GM12878 (cell line): ENCODE measurements at regions of chr11 and their contacts with region 1.

Region 1: DNA sequence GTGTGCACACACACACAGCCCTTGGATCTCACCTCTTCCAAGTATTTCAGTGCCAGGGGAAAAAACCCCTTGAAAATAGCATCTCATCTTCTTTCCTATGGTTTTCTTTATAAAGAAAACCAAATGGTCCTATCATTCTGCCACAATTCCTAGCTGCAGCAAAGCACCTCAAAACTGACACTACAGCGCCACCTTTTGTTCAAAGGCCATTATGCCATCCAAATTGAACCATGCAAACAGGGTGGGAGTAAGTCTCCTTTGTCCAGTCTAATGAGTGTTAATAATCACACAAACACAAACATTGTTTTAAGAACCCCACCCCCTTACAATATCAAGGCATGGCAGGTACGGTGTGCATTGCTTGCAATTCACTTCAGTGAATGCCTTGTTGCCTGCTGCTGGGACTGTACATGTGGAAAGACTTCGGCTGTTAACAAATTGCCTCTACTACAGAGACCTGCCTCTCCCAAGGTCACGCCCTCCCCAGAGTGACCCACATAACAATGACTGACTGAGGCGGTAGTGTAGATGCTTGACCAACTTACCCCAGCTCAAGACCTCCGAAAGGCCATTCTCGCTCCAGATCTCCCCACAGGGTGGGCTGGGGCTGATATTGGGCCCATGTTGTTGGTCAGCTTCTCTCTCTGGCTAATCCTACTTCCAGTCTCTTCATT is 31.7 kb downstream of the FAM181B start:
- DNase-seq: no peak
- ATAC-seq: peak; percentile 77
- H3K4me3 ChIP-seq: no peak overlapping the region
- H3K27ac ChIP-seq: no peak overlapping the region
- H3K4me1 ChIP-seq: no peaks in the 10 kb centered on the region
- H3K27me3 ChIP-seq: no peaks in the 10 kb centered on the region; a peak in 1 of 4 replicates
- CTCF ChIP-seq: peak; percentile 68 to 73 (median 72)
- EP300 ChIP-seq: no peak
- POLR2A ChIP-seq: no peak
- RAD21 ChIP-seq: peak; percentile 64

Region 2: GRCh38 chr11:81644239-81644840 is 1057.6 kb before region 1 on chr11:
- CTCF ChIA-PET with region 1: interaction called, 3 read pairs
- POLR2A ChIA-PET with region 1: no interaction called
- RAD21 ChIA-PET with region 1: no interaction called
- SMC1A ChIA-PET with region 1: interaction called, 3 read pairs
- in situ Hi-C with region 1: loop called (anchors 10 kb)
- intact Hi-C with region 1: no loop called
- DNase-seq: no peak
- ATAC-seq: peak; percentile 90
- H3K4me3 ChIP-seq: no peak overlapping the region
- H3K27ac ChIP-seq: no peak overlapping the region
- H3K4me1 ChIP-seq: no peaks in the 10 kb centered on the region
- H3K27me3 ChIP-seq: no peaks in the 10 kb centered on the region
- CTCF ChIP-seq: peak; percentile 49 to 58 (median 55); a peak in 5 of 6 replicates
- EP300 ChIP-seq: no peak
- POLR2A ChIP-seq: no peak
- RAD21 ChIP-seq: peak; percentile 69

Region 3: DNA sequence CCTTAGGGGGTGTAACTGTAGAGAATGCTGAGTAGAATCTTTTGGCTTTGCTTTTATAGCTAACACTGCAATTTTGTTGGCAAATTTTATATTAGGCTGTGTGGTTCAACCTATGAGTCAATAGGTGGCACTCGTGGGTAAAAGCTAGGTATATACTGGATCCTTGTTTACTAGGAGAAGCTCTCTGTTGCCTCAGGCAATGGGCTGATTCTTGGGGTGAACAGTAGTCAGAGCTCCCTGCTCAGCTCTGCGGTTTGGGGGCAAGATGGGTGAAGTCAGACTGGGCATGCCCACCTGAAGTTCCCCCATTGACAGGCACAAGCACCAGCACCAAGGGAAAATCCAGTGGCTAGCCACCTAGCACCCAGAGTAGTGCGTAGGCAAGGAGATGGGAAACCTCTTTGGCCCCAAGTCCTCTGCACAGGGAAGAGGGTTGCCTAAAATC is 207.0 kb before region 1 on chr11:
- CTCF ChIA-PET with region 1: interaction called, 15 read pairs
- POLR2A ChIA-PET with region 1: no interaction called
- RAD21 ChIA-PET with region 1: interaction called, 3 read pairs
- SMC1A ChIA-PET with region 1: interaction called, 4 read pairs
- in situ Hi-C with region 1: no loop called
- intact Hi-C with region 1: no loop called
- DNase-seq: no peak
- ATAC-seq: peak; percentile 86
- H3K4me3 ChIP-seq: no peak overlapping the region
- H3K27ac ChIP-seq: no peak overlapping the region
- H3K4me1 ChIP-seq: no peaks in the 10 kb centered on the region
- H3K27me3 ChIP-seq: no peaks in the 10 kb centered on the region
- CTCF ChIP-seq: peak; percentile 32 to 53 (median 46); a peak in 5 of 6 replicates
- EP300 ChIP-seq: no peak
- POLR2A ChIP-seq: no peak
- RAD21 ChIP-seq: no peak

Region 4: GRCh38 chr11:82653752-82654151 is 48.2 kb before region 1 on chr11:
- CTCF ChIA-PET with region 1: no interaction called
- POLR2A ChIA-PET with region 1: no interaction called
- RAD21 ChIA-PET with region 1: no interaction called
- SMC1A ChIA-PET with region 1: no interaction called
- in situ Hi-C with region 1: no loop called
- intact Hi-C with region 1: no loop called
- DNase-seq: no peak
- ATAC-seq: no peak
- H3K4me3 ChIP-seq: no peak overlapping the region
- H3K27ac ChIP-seq: no peak overlapping the region
- H3K4me1 ChIP-seq: no peaks in the 10 kb centered on the region
- H3K27me3 ChIP-seq: no peaks in the 10 kb centered on the region
- CTCF ChIP-seq: no peak
- EP300 ChIP-seq: no peak
- POLR2A ChIP-seq: no peak
- RAD21 ChIP-seq: no peak

Region 5: GRCh38 chr11:82682003-82682751 is 19.8 kb before region 1 on chr11:
- CTCF ChIA-PET with region 1: interaction called, 28 read pairs
- POLR2A ChIA-PET with region 1: no interaction called
- RAD21 ChIA-PET with region 1: no interaction called
- SMC1A ChIA-PET with region 1: interaction called, 18 read pairs
- in situ Hi-C with region 1: no loop called
- intact Hi-C with region 1: no loop called
- DNase-seq: peak; percentile 9
- ATAC-seq: peak; percentile 95
- H3K4me3 ChIP-seq: no peak overlapping the region
- H3K27ac ChIP-seq: no peak overlapping the region
- H3K4me1 ChIP-seq: no peaks in the 10 kb centered on the region
- H3K27me3 ChIP-seq: no peaks in the 10 kb centered on the region; a peak in 1 of 4 replicates
- CTCF ChIP-seq: peak; percentile 42 to 67 (median 58); a peak in 5 of 6 replicates
- EP300 ChIP-seq: no peak
- POLR2A ChIP-seq: no peak
- RAD21 ChIP-seq: peak; percentile 73

Region 6: DNA sequence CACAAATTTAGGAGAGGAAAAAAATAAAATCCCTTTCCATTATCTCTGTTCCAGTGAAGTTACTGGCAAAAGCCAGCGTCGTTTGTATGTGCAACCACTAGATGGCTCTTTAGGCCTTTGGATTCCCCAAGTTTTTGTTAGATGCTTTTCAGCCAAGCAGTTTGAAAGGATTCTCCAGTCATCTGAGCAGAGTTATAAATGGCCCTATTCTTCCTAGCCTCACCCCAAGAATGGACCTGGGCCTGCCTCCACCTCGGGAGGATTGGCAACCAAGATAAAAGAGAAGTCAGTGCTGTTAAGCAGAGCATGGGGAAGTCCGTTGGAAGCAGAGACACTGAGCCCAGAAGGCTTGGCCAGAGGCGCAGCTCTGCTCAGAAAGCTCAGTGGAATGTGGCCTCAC is 16.3 kb after region 1 on chr11:
- CTCF ChIA-PET with region 1: interaction called, 14 read pairs
- POLR2A ChIA-PET with region 1: no interaction called
- RAD21 ChIA-PET with region 1: interaction called, 5 read pairs
- SMC1A ChIA-PET with region 1: interaction called, 7 read pairs
- in situ Hi-C with region 1: no loop called
- intact Hi-C with region 1: no loop called
- DNase-seq: no peak
- ATAC-seq: peak; percentile 75
- H3K4me3 ChIP-seq: no peak overlapping the region
- H3K27ac ChIP-seq: no peak overlapping the region
- H3K4me1 ChIP-seq: no peaks in the 10 kb centered on the region
- H3K27me3 ChIP-seq: no peaks in the 10 kb centered on the region
- CTCF ChIP-seq: peak; percentile 72 to 75 (median 73)
- EP300 ChIP-seq: no peak
- POLR2A ChIP-seq: no peak
- RAD21 ChIP-seq: peak; percentile 76